ENCODE measurements at regions of chr1 and their contacts with region 1.

Region 1: DNA sequence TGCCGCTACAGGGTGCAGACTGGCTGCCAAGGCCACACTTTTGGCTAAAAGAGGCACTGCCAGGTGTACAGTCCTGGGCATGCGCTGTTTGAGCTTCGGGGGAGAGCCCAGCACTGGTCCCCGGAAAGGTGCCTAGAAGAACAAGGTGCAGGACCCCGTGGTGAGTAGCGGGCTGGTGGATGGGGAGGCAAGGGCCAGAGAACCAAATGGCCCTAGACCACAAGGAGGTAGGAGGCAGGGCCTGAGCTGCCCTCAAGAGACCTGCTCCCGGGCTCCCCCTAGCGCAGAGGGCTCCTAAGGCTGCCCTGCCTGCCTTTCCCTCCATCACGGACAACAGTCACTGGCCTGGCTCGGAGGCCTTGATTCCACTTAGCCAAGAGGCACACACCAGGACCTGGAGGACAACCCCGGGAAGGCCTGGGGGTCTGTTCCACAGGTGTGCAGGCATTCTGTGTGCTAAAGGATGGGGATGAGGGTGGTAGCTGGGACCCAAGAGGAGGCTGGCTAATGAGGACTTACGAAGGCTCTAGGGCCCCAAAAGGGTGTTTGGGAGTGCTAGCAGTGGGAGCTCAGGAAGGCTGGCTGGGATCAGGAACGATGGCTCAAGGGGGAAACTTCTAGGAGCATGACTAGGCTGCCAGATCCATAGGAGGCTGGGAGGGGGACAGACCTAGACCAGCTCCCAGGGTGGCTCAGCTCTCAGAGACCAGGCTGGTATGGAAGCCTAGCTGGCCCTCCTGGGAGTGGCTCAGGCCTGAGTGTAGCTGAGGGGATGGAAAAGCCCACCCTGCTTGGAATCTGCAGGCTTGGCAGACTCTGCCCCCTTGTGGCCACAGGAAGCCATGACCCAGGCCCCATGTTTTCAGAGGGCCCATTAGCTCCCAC is 742 bp downstream of the ARTN start:
- DNase-seq: peak; percentile 64 to 90
- H3K4me3 ChIP-seq: peak overlapping the region; percentile 90
- H3K27ac ChIP-seq: peak overlapping the region; percentile 84
- H3K4me1 ChIP-seq: peaks cover 43% of the 10 kb centered on the region
- H3K27me3 ChIP-seq: no peaks in the 10 kb centered on the region
- CTCF ChIP-seq: peak; percentile 90

Region 2: DNA sequence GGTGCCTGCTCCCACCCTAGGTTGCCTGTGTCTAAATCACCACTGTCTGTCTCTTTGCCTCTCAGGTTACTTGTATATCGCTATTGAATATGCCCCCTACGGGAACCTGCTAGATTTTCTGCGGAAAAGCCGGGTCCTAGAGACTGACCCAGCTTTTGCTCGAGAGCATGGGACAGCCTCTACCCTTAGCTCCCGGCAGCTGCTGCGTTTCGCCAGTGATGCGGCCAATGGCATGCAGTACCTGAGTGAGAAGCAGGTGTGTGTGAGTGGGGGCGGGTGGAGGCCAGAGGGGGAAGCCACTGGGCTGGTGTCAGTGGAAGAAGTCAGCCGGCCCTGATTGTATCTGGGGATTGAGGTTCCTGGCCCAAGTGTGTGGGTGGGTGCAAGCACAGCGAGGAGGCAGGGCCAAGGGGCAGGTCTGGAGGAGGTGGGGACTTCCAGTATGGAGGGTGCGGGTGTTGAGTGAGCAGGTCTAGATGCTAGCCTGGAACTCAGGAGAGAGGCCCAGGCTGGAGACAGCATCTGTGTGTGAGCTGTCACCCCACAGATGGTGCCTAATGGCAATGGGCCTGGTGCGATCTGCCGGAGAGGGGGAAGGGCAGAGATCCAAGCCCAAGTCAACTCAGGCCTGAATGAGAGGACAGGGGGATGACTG is 616.4 kb before region 1 on chr1:
- CTCF ChIA-PET with region 1: no interaction called
- POLR2A ChIA-PET with region 1: no interaction called
- intact Hi-C with region 1: no loop called
- DNase-seq: no peak
- H3K4me3 ChIP-seq: no peak overlapping the region
- H3K27ac ChIP-seq: no peak overlapping the region
- H3K4me1 ChIP-seq: peaks cover 8% of the 10 kb centered on the region
- H3K27me3 ChIP-seq: no peaks in the 10 kb centered on the region
- CTCF ChIP-seq: no peak

Region 3: GRCh38 chr1:43537423-43538159 is 396.8 kb before region 1 on chr1:
- CTCF ChIA-PET with region 1: no interaction called
- POLR2A ChIA-PET with region 1: interaction called, 3 read pairs
- intact Hi-C with region 1: loop called (anchors 1 kb)
- DNase-seq: peak; percentile 74 to 76
- H3K4me3 ChIP-seq: no peak overlapping the region
- H3K27ac ChIP-seq: peak overlapping the region; percentile 72
- H3K4me1 ChIP-seq: peaks cover 56% of the 10 kb centered on the region
- H3K27me3 ChIP-seq: no peaks in the 10 kb centered on the region
- CTCF ChIP-seq: no peak

Region 4: GRCh38 chr1:43706598-43707495 is 227.5 kb before region 1 on chr1:
- CTCF ChIA-PET with region 1: no interaction called
- POLR2A ChIA-PET with region 1: interaction called, 3 read pairs
- intact Hi-C with region 1: loop called (anchors 1 kb)
- DNase-seq: peak; percentile 81 to 96
- H3K4me3 ChIP-seq: peak overlapping the region; percentile 92
- H3K27ac ChIP-seq: no peak overlapping the region
- H3K4me1 ChIP-seq: peaks cover 28% of the 10 kb centered on the region
- H3K27me3 ChIP-seq: no peaks in the 10 kb centered on the region
- CTCF ChIP-seq: no peak

Region 5: DNA sequence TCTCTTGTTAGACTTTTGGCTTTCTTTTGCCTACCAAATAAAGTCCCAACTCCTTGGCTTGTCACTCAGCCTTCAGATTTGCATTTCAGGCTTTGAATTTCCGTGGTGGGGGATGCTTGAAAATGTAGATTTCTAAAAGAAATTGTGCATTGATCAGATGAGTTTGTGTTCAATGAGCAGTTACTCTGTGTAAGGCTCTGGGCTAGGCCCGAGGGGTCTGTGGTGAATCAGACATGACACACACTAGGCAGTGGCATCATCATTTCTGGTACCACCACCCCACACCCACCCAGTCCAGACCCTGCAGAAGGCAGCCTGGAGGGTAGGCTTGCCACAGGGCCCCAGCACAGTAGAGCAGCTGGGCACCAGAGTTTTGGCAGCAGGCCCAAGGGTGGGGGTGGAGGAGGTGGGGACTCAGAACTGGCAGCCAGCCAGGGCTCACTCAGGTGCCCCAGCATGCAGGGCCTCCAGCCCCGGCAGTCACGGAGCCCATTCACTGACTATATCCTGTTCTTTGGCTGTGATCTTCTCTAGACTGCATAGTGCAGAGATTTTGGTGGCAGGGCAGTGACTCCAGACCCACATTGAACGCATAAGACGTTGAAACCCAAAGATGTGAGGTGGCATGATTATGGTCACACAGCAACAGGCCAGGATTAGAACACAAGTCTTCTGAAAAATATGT is 97.9 kb before region 1 on chr1:
- CTCF ChIA-PET with region 1: no interaction called
- POLR2A ChIA-PET with region 1: no interaction called
- intact Hi-C with region 1: loop called (anchors 1 kb)
- DNase-seq: peak; percentile 68 to 95
- H3K4me3 ChIP-seq: no peak overlapping the region
- H3K27ac ChIP-seq: peak overlapping the region; percentile 94
- H3K4me1 ChIP-seq: peaks cover 62% of the 10 kb centered on the region
- H3K27me3 ChIP-seq: no peaks in the 10 kb centered on the region
- CTCF ChIP-seq: no peak

Region 6: DNA sequence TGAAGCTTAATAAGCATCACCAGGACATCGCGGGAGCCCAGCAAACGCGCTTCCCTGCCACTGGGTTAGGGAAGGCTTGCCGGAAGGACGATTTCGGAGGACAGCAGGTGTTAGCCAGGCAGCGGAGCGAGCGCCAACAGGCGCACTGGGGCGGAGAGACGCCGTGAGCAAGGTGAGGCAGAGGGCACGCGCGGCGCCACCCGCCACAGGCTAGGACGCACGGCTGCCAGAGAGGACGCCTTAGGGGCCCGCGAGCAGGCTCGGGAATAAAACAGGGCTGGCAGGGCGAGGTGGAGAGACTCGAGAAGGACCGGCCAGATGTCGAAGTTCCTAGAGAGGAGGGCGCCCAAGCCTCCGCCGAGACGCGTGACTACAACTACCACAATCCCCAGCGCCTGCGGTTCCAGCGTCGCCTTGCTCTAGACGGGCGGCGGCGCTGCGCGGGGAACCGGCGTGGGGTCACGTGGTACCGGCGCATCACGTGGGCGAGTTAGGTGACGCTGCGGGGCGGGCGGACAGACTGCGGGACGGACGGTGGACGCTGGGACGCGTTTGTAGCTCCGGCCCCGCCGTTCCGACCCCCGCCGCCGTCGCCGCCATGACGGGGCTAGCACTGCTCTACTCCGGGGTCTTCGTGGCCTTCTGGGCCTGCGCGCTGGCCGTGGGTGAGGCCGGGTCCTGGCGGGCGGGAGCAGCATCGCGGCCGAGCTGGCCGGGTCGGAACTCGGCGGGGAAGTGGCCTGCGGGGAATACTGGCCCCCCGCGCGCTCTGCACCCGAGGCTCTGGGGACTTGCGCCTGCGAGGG is 40.3 kb after region 1 on chr1 and contains the start of gene ATP6V0B:
- CTCF ChIA-PET with region 1: interaction called, 4 read pairs
- POLR2A ChIA-PET with region 1: interaction called, 11 read pairs
- intact Hi-C with region 1: no loop called
- DNase-seq: peak; percentile 84 to 96
- H3K4me3 ChIP-seq: peak within 1 kb of the TSS; percentile 67
- H3K27ac ChIP-seq: peak within 1 kb of the TSS; percentile 38
- H3K4me1 ChIP-seq: peaks cover 46% of the 10 kb centered on the region
- H3K27me3 ChIP-seq: no peaks in the 10 kb centered on the region
- CTCF ChIP-seq: no peak
- total RNA-seq, gene ATP6V0B: 110 and 125 TPM in 2 replicates

Region 7: DNA sequence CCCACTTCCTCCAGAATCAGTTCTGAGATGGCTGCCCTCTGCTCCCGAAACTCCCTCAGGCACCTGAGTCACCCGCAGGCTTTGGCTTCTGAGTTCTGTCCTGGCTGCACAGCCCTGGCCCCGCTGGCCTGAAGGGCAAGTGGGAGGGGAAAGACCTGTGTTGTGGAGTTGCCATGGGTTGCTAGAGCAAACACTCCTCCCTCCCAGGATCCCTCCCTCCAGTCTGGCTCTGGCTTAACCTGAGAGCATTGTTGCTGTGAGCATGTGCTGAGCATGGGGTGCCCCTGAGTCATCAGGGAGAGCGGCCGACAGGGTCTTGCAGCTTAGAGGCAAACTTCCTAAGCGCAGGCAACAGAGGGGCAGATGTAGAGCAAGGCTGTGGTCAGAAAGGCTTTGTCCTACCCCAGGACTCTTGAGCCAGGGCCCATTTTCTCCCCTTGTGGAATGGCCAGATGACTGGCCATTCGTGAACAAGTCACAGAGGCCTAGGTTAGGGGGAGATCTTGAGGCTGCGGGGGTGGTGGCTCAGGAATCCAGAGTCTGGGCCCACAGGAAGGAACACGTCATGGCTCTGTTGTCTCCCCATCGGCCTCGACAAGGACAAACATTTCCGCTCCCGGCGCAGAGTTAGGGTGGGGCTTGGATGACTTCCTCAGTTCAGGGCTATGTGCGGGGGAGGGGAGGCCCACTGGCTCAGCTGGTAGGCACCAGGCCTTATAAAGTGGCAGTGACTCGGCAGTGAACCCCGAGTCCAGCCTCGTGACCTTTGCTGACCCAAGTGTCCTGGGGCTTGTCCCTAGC is 873.1 kb after region 1 on chr1 and contains the start of gene DYNLT4:
- CTCF ChIA-PET with region 1: no interaction called
- POLR2A ChIA-PET with region 1: no interaction called
- intact Hi-C with region 1: no loop called
- DNase-seq: peak; percentile 99
- H3K4me3 ChIP-seq: peak within 1 kb of the TSS; percentile 30; the same call in 1 of the 2 replicates
- H3K27ac ChIP-seq: peak within 1 kb of the TSS; percentile 98
- H3K4me1 ChIP-seq: peaks cover 95% of the 10 kb centered on the region
- H3K27me3 ChIP-seq: no peaks in the 10 kb centered on the region
- CTCF ChIP-seq: no peak
- total RNA-seq, gene DYNLT4: 2.8 and 4.3 TPM in 2 replicates

Measured in PC-9 (cell line).